Endothelial cell of umbilical vein (primary cell): ENCODE measurements at regions of chr14 and their contacts with region 1.

Region 1: DNA sequence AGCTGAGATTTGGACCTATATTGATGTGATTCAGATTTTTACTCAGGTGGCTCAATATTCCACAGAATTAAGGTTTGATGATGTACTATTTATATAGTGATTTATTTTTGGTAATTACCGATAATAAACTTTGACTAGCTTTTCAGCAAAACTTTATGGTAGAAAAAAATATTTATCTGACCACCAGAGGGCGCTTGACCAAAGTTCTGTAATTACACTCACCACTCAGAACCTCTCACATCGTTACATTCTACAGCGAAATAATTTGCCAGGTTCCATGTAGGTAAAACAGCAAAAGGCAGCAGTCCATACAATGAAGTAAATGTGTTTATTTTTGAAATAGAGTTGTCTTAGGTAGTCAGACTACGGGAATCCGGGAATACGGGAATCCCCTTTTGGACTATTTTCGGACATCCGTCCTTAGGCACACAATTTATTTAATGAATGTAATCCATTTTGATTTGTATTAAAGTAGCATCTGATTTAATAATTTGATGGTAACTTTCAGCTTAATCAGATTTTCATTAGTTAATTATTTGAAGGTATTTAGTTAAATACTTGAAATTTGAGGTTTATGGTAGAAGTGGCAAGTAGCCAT is 143.0 kb upstream of the DDHD1 start:
- DNase-seq: peak; percentile 48
- H3K4me3 ChIP-seq: no peak overlapping the region
- H3K27ac ChIP-seq: no peak overlapping the region
- H3K4me1 ChIP-seq: no peaks in the 10 kb centered on the region
- H3K27me3 ChIP-seq: peaks cover 0 to 2% of the 10 kb centered on the region in 2 experiments
- CTCF ChIP-seq: peak; percentile 41 to 45
- POLR2A ChIP-seq: no peak

Region 2: DNA sequence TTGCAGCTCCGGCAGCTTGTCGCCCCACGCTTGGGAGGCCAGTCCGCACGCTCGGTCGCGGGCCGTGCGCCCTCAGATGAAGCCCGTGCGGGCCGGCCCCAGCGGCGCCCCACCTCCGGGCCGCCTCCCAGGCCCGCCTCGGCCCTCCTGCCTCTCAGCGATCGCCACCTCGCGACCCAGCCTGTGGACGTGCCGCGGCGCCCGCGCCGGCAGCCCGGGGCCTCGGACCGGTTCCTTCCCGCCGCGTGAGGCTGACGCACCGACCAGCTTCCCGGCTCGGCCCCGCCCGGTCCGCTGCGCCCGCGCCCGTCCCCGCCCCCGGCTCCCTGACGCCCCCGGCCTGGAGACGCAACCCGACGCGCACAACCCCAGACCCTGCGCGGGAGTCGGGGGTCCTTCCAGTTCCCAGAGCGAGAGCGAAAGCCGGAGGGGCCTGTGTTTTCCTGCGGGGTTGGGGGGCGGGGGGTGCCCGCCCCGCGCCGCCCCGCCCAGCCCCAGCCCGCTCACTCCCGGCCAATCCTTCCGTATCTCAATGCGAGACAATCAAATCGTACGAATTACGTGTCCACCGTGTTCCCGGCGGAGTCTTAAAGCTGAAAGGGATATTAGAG is 600.5 kb before region 1 on chr14 and contains the start of gene ERO1A:
- CTCF ChIA-PET with region 1: no interaction called
- POLR2A ChIA-PET with region 1: no interaction called
- dilution Hi-C with region 1: no loop called
- intact Hi-C with region 1: no loop called
- DNase-seq: peak; percentile 86
- H3K4me3 ChIP-seq: peak within 1 kb of the TSS; percentile 33 to 74 (median 60)
- H3K27ac ChIP-seq: peak within 1 kb of the TSS; percentile 80
- H3K4me1 ChIP-seq: peaks cover 13% of the 10 kb centered on the region
- H3K27me3 ChIP-seq: no peaks in the 10 kb centered on the region
- CTCF ChIP-seq: no peak
- POLR2A ChIP-seq: peak; percentile 42
- total RNA-seq, gene ERO1A: 71.4 and 76.8 TPM in 2 replicates

Region 3: GRCh38 chr14:53152890-53153701 is 143.0 kb before region 1 on chr14 and contains the start of gene DDHD1:
- CTCF ChIA-PET with region 1: interaction called, 17 read pairs
- POLR2A ChIA-PET with region 1: no interaction called
- dilution Hi-C with region 1: no loop called
- intact Hi-C with region 1: no loop called
- DNase-seq: peak; percentile 67
- H3K4me3 ChIP-seq: peak within 1 kb of the TSS; percentile 59 to 73 (median 61)
- H3K27ac ChIP-seq: peak within 1 kb of the TSS; percentile 61
- H3K4me1 ChIP-seq: peaks cover 8% of the 10 kb centered on the region
- H3K27me3 ChIP-seq: no peaks in the 10 kb centered on the region
- CTCF ChIP-seq: no peak
- POLR2A ChIP-seq: peak; percentile 66
- total RNA-seq, gene DDHD1: 12.4 and 13.9 TPM in 2 replicates

Region 4: DNA sequence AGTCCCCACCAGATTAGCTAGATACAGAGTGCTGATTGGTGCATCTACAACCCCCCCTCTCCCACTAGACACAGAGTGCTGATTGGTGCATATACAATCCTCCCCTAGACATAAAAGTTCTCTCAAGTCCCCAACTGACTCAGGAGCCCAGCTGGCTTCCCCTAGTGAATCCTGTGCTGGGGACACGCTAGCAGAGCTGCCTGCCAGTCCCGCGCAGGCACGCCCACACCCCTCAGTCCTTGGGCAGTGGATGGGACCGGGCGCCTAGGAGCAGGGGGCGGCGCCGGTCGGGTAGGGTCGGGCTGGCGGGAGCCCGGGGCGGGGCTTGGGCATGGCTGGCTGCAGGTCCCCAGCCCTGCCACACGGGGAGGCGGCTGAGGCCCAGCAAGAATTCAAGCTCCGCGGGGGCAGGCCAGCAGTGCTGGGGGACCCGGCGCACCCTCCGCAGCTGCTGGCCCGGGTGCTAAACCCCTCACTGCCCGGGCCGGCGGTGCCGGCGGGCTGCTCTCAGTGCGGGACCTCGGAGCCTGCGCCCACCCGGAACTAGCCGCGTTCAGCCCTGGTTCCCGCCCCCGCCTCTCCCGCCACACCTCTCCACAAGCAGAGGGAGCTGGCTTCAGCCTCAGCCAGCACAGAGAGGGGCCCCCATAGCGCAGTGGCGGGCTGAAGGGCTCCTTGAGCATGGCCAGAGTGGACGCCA is 78.6 kb before region 1 on chr14:
- CTCF ChIA-PET with region 1: interaction called, 15 read pairs
- POLR2A ChIA-PET with region 1: no interaction called
- dilution Hi-C with region 1: no loop called
- intact Hi-C with region 1: no loop called
- DNase-seq: peak; percentile 79
- H3K4me3 ChIP-seq: peak overlapping the region in 2 of 3 experiments; percentile 22 to 69
- H3K27ac ChIP-seq: no peak overlapping the region
- H3K4me1 ChIP-seq: no peaks in the 10 kb centered on the region
- H3K27me3 ChIP-seq: no peaks in the 10 kb centered on the region
- CTCF ChIP-seq: peak; percentile 29 to 58
- POLR2A ChIP-seq: no peak

Region 5: GRCh38 chr14:53237488-53237887 is 58.6 kb before region 1 on chr14:
- CTCF ChIA-PET with region 1: interaction called, 4 read pairs
- POLR2A ChIA-PET with region 1: no interaction called
- dilution Hi-C with region 1: no loop called
- intact Hi-C with region 1: loop called (anchors 5 kb)
- DNase-seq: peak; percentile 78
- H3K4me3 ChIP-seq: no peak overlapping the region
- H3K27ac ChIP-seq: peak overlapping the region; percentile 63
- H3K4me1 ChIP-seq: peaks cover 15% of the 10 kb centered on the region
- H3K27me3 ChIP-seq: no peaks in the 10 kb centered on the region
- CTCF ChIP-seq: no peak
- POLR2A ChIP-seq: no peak

Region 6: GRCh38 chr14:53278930-53279506 is 17.1 kb before region 1 on chr14:
- CTCF ChIA-PET with region 1: interaction called, 18 read pairs
- POLR2A ChIA-PET with region 1: no interaction called
- dilution Hi-C with region 1: no loop called
- intact Hi-C with region 1: no loop called
- DNase-seq: peak; percentile 66
- H3K4me3 ChIP-seq: no peak overlapping the region
- H3K27ac ChIP-seq: peak overlapping the region; percentile 10
- H3K4me1 ChIP-seq: peaks cover 9% of the 10 kb centered on the region
- H3K27me3 ChIP-seq: no peaks in the 10 kb centered on the region
- CTCF ChIP-seq: no peak
- POLR2A ChIP-seq: no peak

Region 7: GRCh38 chr14:53285805-53286204 is 10.3 kb before region 1 on chr14:
- CTCF ChIA-PET with region 1: interaction called, 18 read pairs
- POLR2A ChIA-PET with region 1: no interaction called
- dilution Hi-C with region 1: no loop called
- intact Hi-C with region 1: no loop called
- DNase-seq: no peak
- H3K4me3 ChIP-seq: no peak overlapping the region
- H3K27ac ChIP-seq: no peak overlapping the region
- H3K4me1 ChIP-seq: no peaks in the 10 kb centered on the region
- H3K27me3 ChIP-seq: no peaks in the 10 kb centered on the region
- CTCF ChIP-seq: no peak
- POLR2A ChIP-seq: no peak

Region 8: GRCh38 chr14:53325176-53325806 is 29.2 kb after region 1 on chr14:
- CTCF ChIA-PET with region 1: interaction called, 14 read pairs
- POLR2A ChIA-PET with region 1: no interaction called
- dilution Hi-C with region 1: no loop called
- intact Hi-C with region 1: no loop called
- DNase-seq: no peak
- H3K4me3 ChIP-seq: no peak overlapping the region
- H3K27ac ChIP-seq: no peak overlapping the region
- H3K4me1 ChIP-seq: peaks cover 2% of the 10 kb centered on the region
- H3K27me3 ChIP-seq: peaks cover 2 to 8% of the 10 kb centered on the region in 2 experiments
- CTCF ChIP-seq: peak in 1 of 2 donors; percentile 20
- POLR2A ChIP-seq: no peak

Region 9: GRCh38 chr14:53470351-53471043 is 174.4 kb after region 1 on chr14:
- CTCF ChIA-PET with region 1: no interaction called
- POLR2A ChIA-PET with region 1: no interaction called
- dilution Hi-C with region 1: no loop called
- intact Hi-C with region 1: no loop called
- DNase-seq: no peak
- H3K4me3 ChIP-seq: no peak overlapping the region
- H3K27ac ChIP-seq: no peak overlapping the region
- H3K4me1 ChIP-seq: no peaks in the 10 kb centered on the region
- H3K27me3 ChIP-seq: peaks cover 1 to 2% of the 10 kb centered on the region in 2 experiments
- CTCF ChIP-seq: no peak
- POLR2A ChIP-seq: no peak

Region 10: GRCh38 chr14:53501361-53502211 is 205.5 kb after region 1 on chr14:
- CTCF ChIA-PET with region 1: no interaction called
- POLR2A ChIA-PET with region 1: no interaction called
- dilution Hi-C with region 1: no loop called
- intact Hi-C with region 1: no loop called
- DNase-seq: no peak
- H3K4me3 ChIP-seq: no peak overlapping the region
- H3K27ac ChIP-seq: no peak overlapping the region
- H3K4me1 ChIP-seq: no peaks in the 10 kb centered on the region
- H3K27me3 ChIP-seq: peaks cover 9 to 11% of the 10 kb centered on the region in 2 experiments
- CTCF ChIP-seq: no peak
- POLR2A ChIP-seq: no peak

Region 11: GRCh38 chr14:53640685-53641084 is 344.6 kb after region 1 on chr14:
- CTCF ChIA-PET with region 1: no interaction called
- POLR2A ChIA-PET with region 1: no interaction called
- dilution Hi-C with region 1: no loop called
- intact Hi-C with region 1: no loop called
- DNase-seq: peak; percentile 13
- H3K4me3 ChIP-seq: no peak overlapping the region
- H3K27ac ChIP-seq: no peak overlapping the region
- H3K4me1 ChIP-seq: no peaks in the 10 kb centered on the region
- H3K27me3 ChIP-seq: peaks cover 9% of the 10 kb centered on the region in 2 experiments
- CTCF ChIP-seq: no peak
- POLR2A ChIP-seq: no peak